ENCODE measurements at regions of chr2 and their contacts with region 1.

Region 1: GRCh38 chr2:241081643-241082340 is 20.3 kb downstream of the MTERF4 start:
- DNase-seq: no peak
- ATAC-seq: no peak
- H3K4me3 ChIP-seq: no peak overlapping the region
- H3K4me3 Mint-ChIP-seq: no peak overlapping the region
- H3K27ac ChIP-seq: no peak overlapping the region
- H3K27ac Mint-ChIP-seq: peak overlapping the region; percentile 64
- H3K4me1 ChIP-seq: no peaks in the 10 kb centered on the region
- H3K4me1 Mint-ChIP-seq: peaks cover 10% of the 10 kb centered on the region
- H3K27me3 ChIP-seq: no peaks in the 10 kb centered on the region
- H3K27me3 Mint-ChIP-seq: no peaks in the 10 kb centered on the region
- CTCF ChIP-seq: no peak

Region 2: GRCh38 chr2:240921251-240921994 is 160.4 kb before region 1 on chr2:
- CTCF ChIA-PET with region 1: no interaction called
- POLR2A ChIA-PET with region 1: no interaction called
- intact Hi-C with region 1: no loop called
- DNase-seq: no peak
- ATAC-seq: no peak
- H3K4me3 ChIP-seq: no peak overlapping the region
- H3K4me3 Mint-ChIP-seq: no peak overlapping the region
- H3K27ac ChIP-seq: no peak overlapping the region
- H3K27ac Mint-ChIP-seq: no peak overlapping the region
- H3K4me1 ChIP-seq: peaks cover 4 to 5% of the 10 kb centered on the region in 2 donors
- H3K4me1 Mint-ChIP-seq: peaks cover 4% of the 10 kb centered on the region
- H3K27me3 ChIP-seq: peaks cover 0 to 8% (median 0%) of the 10 kb centered on the region in 4 experiments
- H3K27me3 Mint-ChIP-seq: peaks cover 4% of the 10 kb centered on the region
- CTCF ChIP-seq: no peak

Region 3: DNA sequence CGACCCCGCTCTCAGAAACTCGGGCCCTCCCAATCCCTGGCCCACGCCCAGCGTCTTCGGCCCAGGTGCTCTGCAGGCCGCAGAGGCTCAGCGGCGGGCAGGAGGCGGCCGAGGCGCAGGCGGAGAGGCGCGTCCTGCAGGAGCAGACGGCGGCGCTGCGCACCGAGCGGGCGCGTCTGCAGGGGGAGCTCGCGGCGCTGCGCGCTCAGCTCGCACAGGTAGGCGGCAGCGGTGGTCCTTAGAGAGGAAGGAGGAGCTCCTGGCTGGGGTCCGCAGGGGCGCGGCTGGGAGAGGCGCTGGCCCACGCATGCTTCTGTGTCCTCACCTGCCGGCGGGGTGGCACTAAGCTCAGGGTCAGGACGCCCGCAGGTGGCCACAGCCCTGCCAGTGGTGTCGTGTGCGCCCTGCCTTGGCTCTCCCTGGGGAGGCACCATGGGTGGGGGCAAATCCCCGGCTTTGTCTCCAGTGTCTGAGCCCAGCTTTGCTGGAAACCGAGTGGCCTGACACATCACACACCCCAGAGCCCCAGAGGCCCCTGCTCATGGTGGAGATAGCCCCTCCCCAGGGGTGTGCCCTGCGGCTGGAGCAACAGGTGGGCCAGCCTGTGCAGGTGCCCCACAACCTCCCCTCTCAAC is 98.3 kb before region 1 on chr2:
- CTCF ChIA-PET with region 1: interaction called, 17 read pairs
- POLR2A ChIA-PET with region 1: no interaction called
- intact Hi-C with region 1: no loop called
- DNase-seq: peak; percentile 70
- ATAC-seq: peak; percentile 83
- H3K4me3 ChIP-seq: no peak overlapping the region
- H3K4me3 Mint-ChIP-seq: no peak overlapping the region
- H3K27ac ChIP-seq: no peak overlapping the region
- H3K27ac Mint-ChIP-seq: no peak overlapping the region
- H3K4me1 ChIP-seq: peaks cover 0 to 4% of the 10 kb centered on the region in 2 donors
- H3K4me1 Mint-ChIP-seq: peaks cover 3% of the 10 kb centered on the region
- H3K27me3 ChIP-seq: peaks cover 0 to 10% (median 0%) of the 10 kb centered on the region in 4 experiments
- H3K27me3 Mint-ChIP-seq: peaks cover 3% of the 10 kb centered on the region
- CTCF ChIP-seq: peak; percentile 67

Region 4: DNA sequence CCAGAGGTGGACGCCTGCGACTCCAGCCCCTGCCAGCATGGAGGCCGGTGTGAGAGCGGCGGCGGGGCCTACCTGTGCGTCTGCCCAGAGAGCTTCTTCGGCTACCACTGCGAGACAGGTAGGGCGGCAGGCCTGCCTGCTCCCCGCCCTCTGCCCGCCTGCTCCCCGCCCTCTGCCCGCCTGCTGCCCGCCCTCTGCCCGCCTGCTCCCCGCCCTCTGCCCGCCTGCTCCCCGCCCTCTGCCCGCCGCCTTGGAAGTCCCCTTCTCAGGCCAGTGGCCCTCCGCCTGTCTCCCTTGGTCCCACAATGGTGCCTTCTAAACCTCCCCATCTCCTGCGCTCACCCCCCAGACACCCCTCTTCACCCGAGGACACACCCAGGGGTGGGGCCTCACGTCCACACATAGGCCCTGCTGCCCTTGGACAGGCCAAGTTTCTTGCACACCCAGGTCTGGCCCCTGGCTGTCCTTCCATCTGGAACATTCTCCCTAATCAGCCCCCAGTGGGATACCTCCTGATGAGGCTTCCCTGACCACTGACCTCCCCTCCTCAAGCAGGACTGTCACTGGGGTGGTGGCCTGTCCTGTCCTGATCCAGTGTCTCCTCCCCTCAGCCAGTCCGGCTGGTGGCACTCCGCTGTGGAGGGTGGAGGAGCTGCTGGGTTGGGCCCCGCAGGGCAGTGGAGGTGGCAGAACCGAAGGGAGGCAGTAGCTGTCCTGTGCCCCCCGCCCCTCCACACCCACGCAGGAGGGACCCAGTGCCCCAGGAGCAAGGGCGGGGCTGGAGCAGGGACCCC is 17.6 kb before region 1 on chr2:
- CTCF ChIA-PET with region 1: interaction called, 10 read pairs
- POLR2A ChIA-PET with region 1: no interaction called
- intact Hi-C with region 1: no loop called
- DNase-seq: peak; percentile 58
- ATAC-seq: peak; percentile 65
- H3K4me3 ChIP-seq: peak overlapping the region in 2 of 5 experiments; percentile 36 to 38
- H3K4me3 Mint-ChIP-seq: peak overlapping the region; percentile 63
- H3K27ac ChIP-seq: no peak overlapping the region
- H3K27ac Mint-ChIP-seq: no peak overlapping the region
- H3K4me1 ChIP-seq: peaks cover 3 to 9% of the 10 kb centered on the region in 2 donors
- H3K4me1 Mint-ChIP-seq: peaks cover 4% of the 10 kb centered on the region
- H3K27me3 ChIP-seq: peaks cover 0 to 6% (median 0%) of the 10 kb centered on the region in 4 experiments
- H3K27me3 Mint-ChIP-seq: no peaks in the 10 kb centered on the region
- CTCF ChIP-seq: no peak

Region 5: DNA sequence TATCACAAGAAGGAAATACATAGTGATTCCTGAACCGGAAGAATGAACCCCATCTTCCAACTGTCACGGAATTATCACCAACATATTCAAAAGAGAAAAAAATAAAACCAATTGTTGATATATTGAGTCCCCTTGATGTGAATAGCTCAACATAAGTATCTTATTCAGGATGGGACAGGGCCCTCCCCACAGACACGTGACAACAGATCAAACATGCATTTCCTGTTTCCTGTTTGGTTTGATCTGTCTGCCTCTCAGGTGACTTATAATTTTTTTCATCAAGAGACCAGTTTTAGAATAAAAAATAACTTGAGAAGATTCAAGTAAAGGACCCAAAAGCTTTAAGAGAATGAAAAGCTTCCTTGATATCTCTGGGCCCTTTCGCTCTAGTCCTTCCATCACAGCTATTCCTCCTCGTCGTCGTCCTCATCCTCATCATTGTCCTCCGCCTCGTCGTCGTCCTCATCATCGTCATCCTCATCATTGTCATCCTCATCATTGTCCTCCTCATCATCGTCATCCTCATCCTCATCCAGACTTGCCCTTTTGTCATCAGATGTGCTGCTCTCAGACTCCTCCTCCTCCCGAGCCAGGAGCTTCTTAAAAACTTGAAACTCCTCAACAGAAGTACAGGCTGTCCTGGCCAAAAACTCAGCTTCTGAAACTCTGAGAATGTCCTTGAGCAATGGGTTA is 13.9 kb after region 1 on chr2:
- CTCF ChIA-PET with region 1: interaction called, 24 read pairs
- POLR2A ChIA-PET with region 1: interaction called, 5 read pairs
- intact Hi-C with region 1: no loop called
- DNase-seq: peak; percentile 59
- ATAC-seq: no peak
- H3K4me3 ChIP-seq: no peak overlapping the region
- H3K4me3 Mint-ChIP-seq: peak overlapping the region; percentile 24
- H3K27ac ChIP-seq: peak overlapping the region in 1 of 2 donors; percentile 49
- H3K27ac Mint-ChIP-seq: peak overlapping the region; percentile 33
- H3K4me1 ChIP-seq: peaks cover 39 to 51% of the 10 kb centered on the region in 2 donors
- H3K4me1 Mint-ChIP-seq: peaks cover 54% of the 10 kb centered on the region
- H3K27me3 ChIP-seq: no peaks in the 10 kb centered on the region
- H3K27me3 Mint-ChIP-seq: no peaks in the 10 kb centered on the region
- CTCF ChIP-seq: no peak

Region 6: DNA sequence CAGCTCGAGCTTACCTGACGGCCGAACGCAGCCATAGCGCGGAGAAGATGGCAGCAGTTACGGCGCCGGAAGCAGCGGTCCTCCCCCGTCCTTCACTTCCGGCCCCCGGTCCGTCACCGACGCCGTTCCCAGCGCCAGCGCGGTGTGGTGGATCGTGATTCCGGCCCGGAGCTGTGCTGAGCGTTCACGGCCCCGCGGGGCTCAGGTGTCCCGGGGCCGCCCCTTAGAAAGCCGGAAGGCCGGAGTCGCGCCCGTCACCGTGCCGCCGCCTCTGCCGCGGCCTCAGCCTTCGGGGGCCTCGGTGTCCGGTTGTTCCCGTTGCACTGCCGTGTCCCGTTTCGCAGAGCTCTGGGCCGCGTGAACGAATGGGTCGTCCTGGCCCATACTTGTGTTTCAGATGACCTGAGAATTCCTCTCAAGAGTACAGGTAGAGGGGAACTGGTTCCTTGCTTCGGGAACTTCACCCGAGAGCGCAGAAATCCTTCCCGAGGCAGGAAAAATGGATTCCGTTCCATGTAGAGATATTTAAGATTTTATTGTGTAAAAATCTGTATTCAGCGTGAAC is 20.5 kb after region 1 on chr2 and contains the start of gene MTERF4:
- CTCF ChIA-PET with region 1: interaction called, 9 read pairs
- POLR2A ChIA-PET with region 1: interaction called, 7 read pairs
- intact Hi-C with region 1: loop called (anchors 2 kb)
- DNase-seq: peak; percentile 93
- ATAC-seq: peak; percentile 91
- H3K4me3 ChIP-seq: peak within 1 kb of the TSS; percentile 73 to 95 (median 93)
- H3K4me3 Mint-ChIP-seq: peak within 1 kb of the TSS; percentile 98
- H3K27ac ChIP-seq: peak within 1 kb of the TSS; percentile 88 to 89
- H3K27ac Mint-ChIP-seq: peak within 1 kb of the TSS; percentile 97
- H3K4me1 ChIP-seq: peaks cover 43 to 56% of the 10 kb centered on the region in 2 donors
- H3K4me1 Mint-ChIP-seq: peaks cover 49% of the 10 kb centered on the region
- H3K27me3 ChIP-seq: no peaks in the 10 kb centered on the region
- H3K27me3 Mint-ChIP-seq: no peaks in the 10 kb centered on the region
- CTCF ChIP-seq: no peak
- total RNA-seq, gene MTERF4: 153 and 159 TPM in 2 replicates

Region 7: DNA sequence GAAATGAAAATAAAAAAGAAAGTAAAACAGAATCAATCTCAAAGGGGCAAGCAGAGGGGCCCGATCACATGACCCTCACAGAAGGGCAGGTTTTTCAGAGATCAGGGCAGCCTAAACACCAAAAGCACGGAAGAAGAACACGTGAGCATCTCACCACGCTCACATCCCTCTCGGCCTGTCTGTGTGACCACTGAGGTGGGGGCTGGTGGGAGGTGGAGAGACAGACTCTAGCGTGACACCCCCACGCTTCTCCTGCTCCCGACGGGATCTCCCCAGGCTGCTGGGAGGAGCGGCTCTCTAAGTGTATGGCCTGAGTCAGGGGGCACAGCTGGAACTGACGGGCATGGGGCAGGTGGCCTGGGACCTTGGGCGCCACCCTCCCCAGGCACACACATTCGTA is 43.8 kb after region 1 on chr2:
- CTCF ChIA-PET with region 1: interaction called, 4 read pairs
- POLR2A ChIA-PET with region 1: no interaction called
- intact Hi-C with region 1: loop called (anchors 2 kb)
- DNase-seq: peak; percentile 63
- ATAC-seq: no peak
- H3K4me3 ChIP-seq: peak overlapping the region in 1 of 5 experiments; percentile 10
- H3K4me3 Mint-ChIP-seq: peak overlapping the region; percentile 67
- H3K27ac ChIP-seq: peak overlapping the region; percentile 94 to 97
- H3K27ac Mint-ChIP-seq: peak overlapping the region; percentile 99
- H3K4me1 ChIP-seq: peaks cover 44 to 61% of the 10 kb centered on the region in 2 donors
- H3K4me1 Mint-ChIP-seq: peaks cover 53% of the 10 kb centered on the region
- H3K27me3 ChIP-seq: no peaks in the 10 kb centered on the region
- H3K27me3 Mint-ChIP-seq: no peaks in the 10 kb centered on the region
- CTCF ChIP-seq: no peak

Region 8: DNA sequence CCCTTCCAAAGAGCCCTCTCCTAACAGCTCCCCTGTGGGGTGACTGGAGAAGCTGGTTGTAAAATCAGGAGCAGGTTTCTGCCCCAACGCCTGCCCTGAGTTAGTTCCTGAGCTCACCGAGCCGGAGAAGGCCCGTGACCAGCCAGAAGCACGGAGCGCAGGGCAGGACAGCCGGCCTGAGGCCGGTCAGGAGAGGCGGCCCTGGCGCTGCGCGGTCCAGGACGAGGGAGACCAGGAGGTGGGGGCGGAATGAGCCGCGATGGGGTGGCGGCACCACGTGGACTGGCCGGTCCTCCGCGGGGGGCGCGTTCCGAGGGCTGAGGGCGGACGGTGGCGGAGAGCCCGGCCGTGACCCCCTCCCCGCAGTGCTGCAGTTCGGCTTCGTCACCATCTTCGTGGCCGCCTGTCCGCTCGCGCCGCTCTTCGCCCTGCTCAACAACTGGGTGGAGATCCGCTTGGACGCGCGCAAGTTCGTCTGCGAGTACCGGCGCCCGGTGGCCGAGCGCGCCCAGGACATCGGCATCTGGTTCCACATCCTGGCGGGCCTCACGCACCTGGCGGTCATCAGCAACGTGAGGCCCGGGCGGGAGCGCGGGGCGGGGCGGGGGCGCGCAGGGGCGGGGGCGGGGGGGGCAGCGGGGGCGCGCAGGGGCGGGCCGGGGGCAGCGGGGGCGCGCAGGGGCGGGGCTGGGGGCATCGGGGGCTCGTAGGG is 135.7 kb after region 1 on chr2:
- CTCF ChIA-PET with region 1: interaction called, 4 read pairs
- POLR2A ChIA-PET with region 1: no interaction called
- intact Hi-C with region 1: loop called (anchors 1 kb)
- DNase-seq: peak; percentile 80
- ATAC-seq: peak; percentile 68
- H3K4me3 ChIP-seq: peak overlapping the region in 4 of 5 experiments; percentile 35 to 56 (median 45)
- H3K4me3 Mint-ChIP-seq: peak overlapping the region; percentile 82
- H3K27ac ChIP-seq: peak overlapping the region in 1 of 2 donors; percentile 23
- H3K27ac Mint-ChIP-seq: peak overlapping the region; percentile 73
- H3K4me1 ChIP-seq: peaks cover 10 to 12% of the 10 kb centered on the region in 2 donors
- H3K4me1 Mint-ChIP-seq: peaks cover 14% of the 10 kb centered on the region
- H3K27me3 ChIP-seq: peaks cover 0 to 2% (median 0%) of the 10 kb centered on the region in 4 experiments
- H3K27me3 Mint-ChIP-seq: no peaks in the 10 kb centered on the region
- CTCF ChIP-seq: no peak